Activated CD4-positive, alpha-beta T cell treated with anti-CD3 and anti-CD28 coated beads for 36 hours (primary cell): ENCODE measurements at regions of chr14 and their contacts with region 1.

Region 1: GRCh38 chr14:20343092-20343861 is at the start of gene PARP2:
- DNase-seq: peak; percentile 97
- ATAC-seq: peak; percentile 95
- H3K4me3 Mint-ChIP-seq: peak within 1 kb of the TSS; percentile 89
- H3K27ac Mint-ChIP-seq: peak within 1 kb of the TSS; percentile 92
- H3K4me1 Mint-ChIP-seq: peaks cover 20% of the 10 kb centered on the region
- H3K27me3 Mint-ChIP-seq: no peaks in the 10 kb centered on the region
- total RNA-seq, gene PARP2: 39.4 to 41.8 TPM

Region 2: GRCh38 chr14:20247646-20248246 is 95.5 kb before region 1 on chr14:
- CTCF ChIA-PET with region 1: no interaction called
- POLR2A ChIA-PET with region 1: no interaction called
- intact Hi-C with region 1: no loop called
- DNase-seq: no peak
- ATAC-seq: no peak
- H3K4me3 Mint-ChIP-seq: no peak overlapping the region
- H3K27ac Mint-ChIP-seq: no peak overlapping the region
- H3K4me1 Mint-ChIP-seq: no peaks in the 10 kb centered on the region
- H3K27me3 Mint-ChIP-seq: no peaks in the 10 kb centered on the region

Region 3: DNA sequence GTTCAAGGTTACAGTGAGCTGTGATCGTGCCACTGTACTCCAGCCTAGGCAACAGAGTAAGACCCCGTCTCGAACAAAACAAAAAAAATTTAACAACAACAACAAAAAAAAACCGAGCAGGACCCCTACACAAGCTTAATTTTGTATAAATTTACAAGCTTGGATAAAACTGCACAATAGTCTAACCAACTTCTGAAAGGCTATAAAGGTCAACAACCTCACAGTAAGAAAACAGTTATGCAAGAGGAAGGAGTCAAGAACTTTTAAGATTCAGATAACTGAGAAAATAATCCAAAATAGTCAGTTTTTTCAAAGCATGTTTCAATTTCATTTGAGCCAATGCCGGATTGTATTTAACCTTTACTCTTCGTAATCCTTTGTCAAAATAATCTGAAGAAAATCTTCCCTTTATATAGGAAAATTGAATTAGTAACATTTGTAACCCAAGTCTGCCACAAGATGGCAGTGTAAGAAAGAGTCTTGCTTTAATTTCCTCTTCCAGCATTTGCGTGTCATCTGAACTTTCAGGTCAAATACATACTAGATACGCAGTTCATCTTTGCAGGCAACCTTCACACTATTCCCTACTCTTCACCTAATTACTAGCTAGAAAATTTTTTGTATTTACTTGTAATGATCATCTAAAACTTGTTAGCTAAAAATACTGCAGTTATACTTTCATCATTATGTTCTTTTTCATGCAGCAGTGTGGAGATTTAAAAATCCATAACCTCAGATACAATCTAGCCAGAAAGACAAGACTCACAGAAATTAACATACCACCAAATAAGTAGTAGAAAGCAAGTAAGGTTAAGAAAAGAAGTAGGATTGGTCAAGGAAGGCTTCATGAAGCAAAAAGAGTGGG is 16.0 kb before region 1 on chr14:
- CTCF ChIA-PET with region 1: interaction called, 81 read pairs
- POLR2A ChIA-PET with region 1: interaction called, 32 read pairs
- intact Hi-C with region 1: loop called (anchors 2 kb)
- DNase-seq: no peak
- ATAC-seq: peak; percentile 71
- H3K4me3 Mint-ChIP-seq: no peak overlapping the region
- H3K27ac Mint-ChIP-seq: peak overlapping the region; percentile 44
- H3K4me1 Mint-ChIP-seq: peaks cover 37% of the 10 kb centered on the region
- H3K27me3 Mint-ChIP-seq: no peaks in the 10 kb centered on the region

Region 4: DNA sequence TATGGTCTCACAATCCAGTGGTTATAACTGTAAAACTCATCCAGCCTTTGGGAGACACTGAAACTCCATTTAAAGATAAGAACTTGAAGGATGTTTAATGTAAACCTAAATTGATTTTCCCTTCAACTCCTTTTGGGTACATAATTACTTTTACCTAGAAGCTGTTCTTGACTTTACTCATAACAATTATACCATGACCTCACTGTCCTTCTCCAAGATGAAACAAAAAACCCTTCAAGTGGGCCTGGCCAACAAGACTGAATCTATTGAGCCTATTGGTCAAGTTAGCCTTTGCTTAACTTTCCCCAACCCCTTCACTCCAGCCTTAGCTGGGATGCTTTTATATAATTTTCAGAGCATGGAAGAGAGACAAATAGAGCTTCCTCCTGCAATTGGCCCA is 22.7 kb after region 1 on chr14:
- CTCF ChIA-PET with region 1: interaction called, 6 read pairs
- POLR2A ChIA-PET with region 1: no interaction called
- intact Hi-C with region 1: loop called in 1 of 2 experiments (anchors 1 kb)
- DNase-seq: no peak
- ATAC-seq: no peak
- H3K4me3 Mint-ChIP-seq: no peak overlapping the region
- H3K27ac Mint-ChIP-seq: peak overlapping the region; percentile 68
- H3K4me1 Mint-ChIP-seq: peaks cover 24% of the 10 kb centered on the region
- H3K27me3 Mint-ChIP-seq: no peaks in the 10 kb centered on the region

Region 5: DNA sequence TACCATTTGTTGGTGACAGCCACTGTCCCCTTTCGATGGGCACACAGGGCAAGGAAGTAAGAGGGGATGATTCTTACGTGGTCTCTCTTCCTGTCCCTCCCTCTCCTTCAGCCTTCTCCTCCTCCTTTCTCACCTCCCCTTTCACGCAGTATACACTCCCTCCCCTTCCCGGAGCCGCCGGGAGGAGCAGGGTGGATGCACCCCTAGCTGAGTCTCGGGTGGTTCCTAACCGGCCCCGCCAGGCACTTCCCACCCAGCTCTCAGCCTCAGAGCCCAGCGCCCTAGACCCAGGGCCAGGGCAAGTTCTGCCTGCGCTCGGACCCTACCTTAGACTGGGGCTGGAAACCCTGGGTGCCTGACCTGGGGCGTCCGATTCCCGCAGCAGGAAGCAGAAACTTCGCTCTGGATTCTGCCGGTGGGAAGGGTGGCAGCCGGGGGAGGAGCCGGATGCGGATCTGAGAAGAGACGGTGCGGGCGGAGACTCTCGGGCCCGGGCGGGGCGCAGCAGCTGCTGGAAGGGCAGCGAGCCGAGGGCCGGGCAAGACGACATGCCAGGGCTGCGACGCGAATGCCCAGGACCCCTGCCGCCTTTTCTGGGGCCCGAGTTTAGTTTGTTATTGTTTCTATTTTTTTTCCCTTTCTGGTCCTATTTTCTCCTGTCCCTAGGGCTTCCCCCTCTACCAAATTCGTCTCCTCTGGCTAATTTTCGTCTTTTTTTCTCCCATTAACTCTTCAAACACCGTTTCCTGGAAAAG is 69.9 kb after region 1 on chr14 and contains the start of gene TEP1:
- CTCF ChIA-PET with region 1: interaction called, 23 read pairs
- POLR2A ChIA-PET with region 1: interaction called, 3 read pairs
- intact Hi-C with region 1: loop called (anchors 1 kb)
- DNase-seq: peak; percentile 87
- ATAC-seq: peak; percentile 82
- H3K4me3 Mint-ChIP-seq: peak within 1 kb of the TSS; percentile 82
- H3K27ac Mint-ChIP-seq: peak within 1 kb of the TSS; percentile 94
- H3K4me1 Mint-ChIP-seq: peaks cover 37% of the 10 kb centered on the region
- H3K27me3 Mint-ChIP-seq: no peaks in the 10 kb centered on the region
- total RNA-seq, gene TEP1: 29.2 to 40.1 TPM

Region 6: GRCh38 chr14:20461274-20462001 is 118.2 kb after region 1 on chr14 and contains the start of gene PIP4P1:
- CTCF ChIA-PET with region 1: interaction called, 6 read pairs
- POLR2A ChIA-PET with region 1: interaction called, 49 read pairs
- intact Hi-C with region 1: loop called in 1 of 2 experiments (anchors 1 kb)
- DNase-seq: peak; percentile 99
- ATAC-seq: peak; percentile 95
- H3K4me3 Mint-ChIP-seq: peak within 1 kb of the TSS; percentile 84
- H3K27ac Mint-ChIP-seq: peak within 1 kb of the TSS; percentile 96
- H3K4me1 Mint-ChIP-seq: peaks cover 26% of the 10 kb centered on the region
- H3K27me3 Mint-ChIP-seq: no peaks in the 10 kb centered on the region
- total RNA-seq, gene PIP4P1: 24.2 to 24.7 TPM

Region 7: DNA sequence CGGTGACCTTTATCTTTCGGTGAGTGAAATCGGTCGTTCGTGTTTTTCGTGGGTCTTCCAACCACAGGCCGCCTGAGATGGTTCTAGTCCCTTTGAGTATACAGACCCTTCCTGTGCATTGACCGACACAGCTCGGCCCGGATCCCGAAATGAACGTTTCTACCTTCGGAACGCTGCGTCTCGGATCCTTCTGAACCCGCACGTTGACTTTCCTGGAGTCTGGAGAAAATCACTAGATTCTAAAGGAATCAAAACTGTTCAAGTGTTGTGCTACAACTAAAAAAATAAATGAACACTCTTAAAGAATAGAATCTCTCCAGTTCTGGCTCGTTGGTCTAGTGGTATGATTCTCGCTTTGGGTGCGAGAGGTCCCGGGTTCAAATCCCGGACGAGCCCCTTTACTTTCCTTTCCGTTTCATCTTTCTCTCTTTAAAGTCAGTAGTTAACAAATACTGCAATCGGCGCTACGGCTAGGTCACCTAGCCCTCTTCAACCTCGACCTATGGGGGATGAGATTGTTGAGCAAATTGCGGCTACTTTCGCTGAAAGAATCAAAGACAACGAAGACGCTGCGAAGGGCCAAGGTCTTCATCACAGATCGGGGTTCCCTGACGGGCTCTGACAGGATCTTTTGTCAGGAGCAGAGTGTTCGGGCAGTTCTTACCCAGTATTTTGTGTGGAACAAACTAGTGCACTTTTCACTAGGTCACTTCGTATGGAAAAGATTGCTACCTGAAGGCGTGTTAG is 289.6 kb after region 1 on chr14:
- CTCF ChIA-PET with region 1: no interaction called
- POLR2A ChIA-PET with region 1: no interaction called
- intact Hi-C with region 1: loop called (anchors 1 to 5 kb)
- DNase-seq: peak; percentile 88
- ATAC-seq: peak; percentile 85
- H3K4me3 Mint-ChIP-seq: peak overlapping the region; percentile 75
- H3K27ac Mint-ChIP-seq: peak overlapping the region; percentile 43
- H3K4me1 Mint-ChIP-seq: peaks cover 45% of the 10 kb centered on the region
- H3K27me3 Mint-ChIP-seq: peaks cover 10% of the 10 kb centered on the region